Activated B cell treated with CpG ODN at 0.5 μM for 24 hours (primary cell): ENCODE measurements at regions of chr2 and their contacts with region 1.

Region 1: DNA sequence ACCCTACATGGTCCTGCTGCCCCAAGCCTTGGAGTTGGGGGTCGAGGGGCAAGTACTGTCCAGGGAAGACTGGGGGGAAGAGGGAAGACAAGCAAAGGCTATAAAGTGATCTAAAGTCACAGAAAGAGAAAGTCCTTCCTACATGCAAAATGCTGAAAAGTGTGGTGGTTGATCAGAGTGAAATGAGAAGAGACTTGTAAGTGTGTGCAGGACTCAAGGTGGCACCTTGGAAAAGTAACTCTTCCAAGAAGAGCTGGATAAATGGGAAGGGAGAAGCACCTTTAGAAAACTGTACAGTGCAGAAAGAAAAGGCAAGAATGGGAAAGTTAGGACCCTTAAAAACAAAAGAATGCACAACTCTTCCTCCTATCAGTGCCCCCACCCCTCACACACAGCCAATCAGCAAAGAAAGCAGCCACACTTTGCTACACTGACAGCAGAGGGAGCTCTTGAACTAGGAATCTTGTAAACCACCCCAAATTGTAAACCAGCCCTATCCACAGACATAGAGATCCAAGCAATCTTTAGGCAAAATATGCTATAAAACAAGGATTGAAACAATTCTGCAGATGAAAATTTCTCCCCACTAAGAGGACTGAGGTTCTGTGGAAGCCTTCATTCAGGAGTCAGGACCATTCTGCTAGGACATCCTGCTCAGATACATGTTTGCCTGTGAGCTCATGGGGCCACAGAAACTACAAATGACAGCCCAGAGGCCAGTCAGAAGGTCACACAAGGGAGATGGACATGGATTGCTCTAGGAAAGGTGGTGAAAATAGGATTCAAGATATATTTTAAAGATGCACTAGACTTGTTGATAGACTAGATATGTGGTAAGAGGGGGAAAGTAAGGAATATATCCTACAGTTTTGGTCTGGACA is 146.4 kb downstream of the FTCDNL1 start:
- DNase-seq: no peak
- ATAC-seq: peak; percentile 47
- H3K4me3 Mint-ChIP-seq: no peak overlapping the region
- H3K27ac Mint-ChIP-seq: no peak overlapping the region
- H3K4me1 Mint-ChIP-seq: no peaks in the 10 kb centered on the region
- H3K27me3 Mint-ChIP-seq: peaks cover 2% of the 10 kb centered on the region
- CTCF ChIP-seq: no peak

Region 2: GRCh38 chr2:199602271-199602895 is 102.2 kb before region 1 on chr2:
- CTCF ChIA-PET with region 1: no interaction called
- POLR2A ChIA-PET with region 1: no interaction called
- intact Hi-C with region 1: no loop called
- DNase-seq: no peak
- ATAC-seq: no peak
- H3K4me3 Mint-ChIP-seq: no peak overlapping the region
- H3K27ac Mint-ChIP-seq: no peak overlapping the region
- H3K4me1 Mint-ChIP-seq: peaks cover 5% of the 10 kb centered on the region
- H3K27me3 Mint-ChIP-seq: peaks cover 9% of the 10 kb centered on the region
- CTCF ChIP-seq: no peak

Region 3: GRCh38 chr2:199716807-199717586 is 12.4 kb after region 1 on chr2:
- CTCF ChIA-PET with region 1: no interaction called
- POLR2A ChIA-PET with region 1: no interaction called
- intact Hi-C with region 1: no loop called
- DNase-seq: no peak
- ATAC-seq: no peak
- H3K4me3 Mint-ChIP-seq: no peak overlapping the region
- H3K27ac Mint-ChIP-seq: no peak overlapping the region
- H3K4me1 Mint-ChIP-seq: no peaks in the 10 kb centered on the region
- H3K27me3 Mint-ChIP-seq: peaks cover 3% of the 10 kb centered on the region
- CTCF ChIP-seq: no peak

Region 4: GRCh38 chr2:199861132-199861774 is 156.7 kb after region 1 on chr2:
- CTCF ChIA-PET with region 1: interaction called, 5 read pairs
- POLR2A ChIA-PET with region 1: no interaction called
- intact Hi-C with region 1: loop called (anchors 1 kb)
- DNase-seq: no peak
- ATAC-seq: no peak
- H3K4me3 Mint-ChIP-seq: no peak overlapping the region
- H3K27ac Mint-ChIP-seq: no peak overlapping the region
- H3K4me1 Mint-ChIP-seq: no peaks in the 10 kb centered on the region
- H3K27me3 Mint-ChIP-seq: peaks cover 14% of the 10 kb centered on the region
- CTCF ChIP-seq: peak; percentile 80

Region 5: DNA sequence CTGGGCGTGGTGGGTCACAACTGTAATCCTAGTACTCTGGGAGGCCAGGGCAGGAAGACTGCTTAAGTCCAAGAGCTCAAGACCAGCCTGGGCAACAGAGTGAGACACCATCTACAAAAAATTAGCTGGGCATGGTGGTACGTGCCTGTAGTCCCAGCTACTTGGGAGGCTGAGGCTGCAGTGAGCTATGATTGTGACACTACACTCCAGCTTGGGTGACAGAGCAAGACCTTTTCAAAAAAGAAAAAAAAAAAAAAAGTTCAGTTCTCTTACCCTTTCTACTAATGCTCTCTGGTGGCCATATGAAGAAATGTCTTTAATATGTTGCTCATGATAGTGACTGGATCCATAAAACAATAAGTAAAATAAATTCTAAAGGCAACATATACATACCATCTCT is 235.8 kb after region 1 on chr2:
- CTCF ChIA-PET with region 1: no interaction called
- POLR2A ChIA-PET with region 1: no interaction called
- intact Hi-C with region 1: loop called (anchors 1 kb)
- DNase-seq: no peak
- ATAC-seq: no peak
- H3K4me3 Mint-ChIP-seq: no peak overlapping the region
- H3K27ac Mint-ChIP-seq: no peak overlapping the region
- H3K4me1 Mint-ChIP-seq: no peaks in the 10 kb centered on the region
- H3K27me3 Mint-ChIP-seq: no peaks in the 10 kb centered on the region
- CTCF ChIP-seq: no peak

Region 6: DNA sequence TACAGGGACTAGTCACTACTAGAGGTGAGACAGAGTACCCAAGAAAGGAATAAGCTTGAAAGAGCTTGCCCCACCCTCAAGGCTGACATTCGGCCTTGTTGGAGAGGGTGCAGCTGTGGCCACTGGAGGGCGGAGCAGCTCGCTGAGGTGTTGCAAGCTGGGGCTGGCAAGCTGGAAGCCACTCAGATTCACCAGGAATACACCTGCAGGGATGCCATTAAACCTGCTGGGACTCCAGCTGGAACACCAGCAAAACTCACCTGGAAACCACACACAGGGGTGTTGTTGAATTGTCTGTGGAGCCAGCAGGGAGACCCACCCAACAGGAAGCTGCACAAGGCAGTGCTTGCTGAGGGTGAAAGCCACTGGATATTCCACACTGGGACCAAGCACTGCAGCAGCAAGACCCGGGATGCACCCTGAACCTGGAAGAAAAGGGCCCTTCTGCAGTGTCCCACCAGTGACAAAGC is 779.2 kb after region 1 on chr2:
- CTCF ChIA-PET with region 1: interaction called, 3 read pairs
- POLR2A ChIA-PET with region 1: no interaction called
- intact Hi-C with region 1: loop called (anchors 1 kb)
- DNase-seq: no peak
- ATAC-seq: no peak
- H3K4me3 Mint-ChIP-seq: no peak overlapping the region
- H3K27ac Mint-ChIP-seq: no peak overlapping the region
- H3K4me1 Mint-ChIP-seq: no peaks in the 10 kb centered on the region
- H3K27me3 Mint-ChIP-seq: peaks cover 8% of the 10 kb centered on the region
- CTCF ChIP-seq: no peak